ENCODE measurements at regions of chr21 and their contacts with region 1.

Region 1: DNA sequence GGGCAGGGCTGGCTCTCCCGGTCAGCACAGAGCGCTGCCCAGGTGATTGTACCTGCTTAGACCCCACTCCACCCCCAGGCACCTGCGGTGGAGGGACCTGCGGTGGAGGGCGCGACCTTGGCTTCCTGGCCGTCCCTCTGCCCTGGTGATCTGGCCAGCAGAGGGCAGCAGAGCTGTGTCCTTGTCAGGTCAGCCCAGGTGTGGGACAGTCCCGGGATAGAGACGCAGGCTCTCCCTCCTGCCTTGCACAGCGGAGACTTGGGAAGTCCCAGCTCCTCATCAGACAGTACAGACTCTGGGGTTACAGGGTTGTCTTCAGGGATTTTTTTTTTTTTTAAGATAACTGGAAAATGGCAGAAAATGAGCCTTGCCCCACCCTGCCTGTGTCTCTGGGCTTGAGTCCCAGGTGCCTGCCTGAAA is 10.0 kb downstream of the SLX9 start:
- ATAC-seq: peak; percentile 85 to 96 (median 88)
- H3K4me3 ChIP-seq: no peak overlapping the region
- H3K27ac ChIP-seq: no peak overlapping the region
- H3K4me1 ChIP-seq: peaks cover 0 to under 1% of the 10 kb centered on the region in 2 donors

Region 2: DNA sequence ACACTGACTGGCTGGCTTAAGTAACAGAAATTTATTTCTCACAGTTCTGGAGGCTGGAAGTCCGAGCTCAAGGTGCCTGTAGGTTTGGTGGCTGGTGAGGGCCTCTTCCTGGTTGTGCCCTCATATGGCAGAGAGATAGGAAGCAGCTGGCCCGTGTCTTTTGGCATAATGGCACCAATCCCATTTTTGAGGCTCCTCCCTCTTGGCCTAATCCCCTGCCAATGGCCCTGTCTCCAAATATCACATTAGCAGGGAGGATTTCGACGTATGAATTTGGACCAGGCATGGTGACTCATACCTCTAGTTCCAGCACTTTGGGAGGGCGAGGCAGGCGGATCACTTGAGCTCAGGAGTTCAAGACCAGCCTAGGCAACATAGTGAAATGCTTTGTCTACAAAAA is 1047.3 kb before region 1 on chr21:
- in situ Hi-C with region 1: no loop called
- ATAC-seq: peak in 3 of 8 experiments; percentile 20 to 71 (median 33)
- H3K4me3 ChIP-seq: no peak overlapping the region
- H3K27ac ChIP-seq: no peak overlapping the region
- H3K4me1 ChIP-seq: peaks cover 6% of the 10 kb centered on the region in 2 donors

Region 3: GRCh38 chr21:44709426-44710293 is 240.1 kb before region 1 on chr21:
- in situ Hi-C with region 1: no loop called
- ATAC-seq: peak in 7 of 8 experiments; percentile 9 to 48 (median 28)
- H3K4me3 ChIP-seq: no peak overlapping the region
- H3K27ac ChIP-seq: no peak overlapping the region
- H3K4me1 ChIP-seq: peaks cover 41 to 59% of the 10 kb centered on the region in 2 donors

Region 4: GRCh38 chr21:44761011-44761729 is 188.6 kb before region 1 on chr21:
- in situ Hi-C with region 1: no loop called
- ATAC-seq: peak in 1 of 8 experiments; percentile 34
- H3K4me3 ChIP-seq: no peak overlapping the region
- H3K27ac ChIP-seq: no peak overlapping the region
- H3K4me1 ChIP-seq: peaks cover 0 to 3% of the 10 kb centered on the region in 2 donors

Region 5: GRCh38 chr21:45129189-45129923 is 179.6 kb after region 1 on chr21:
- in situ Hi-C with region 1: loop called in 8 of 9 experiments (anchors 5 to 25 kb)
- ATAC-seq: peak in 3 of 8 experiments; percentile 28 to 69 (median 59)
- H3K4me3 ChIP-seq: no peak overlapping the region
- H3K27ac ChIP-seq: no peak overlapping the region
- H3K4me1 ChIP-seq: peaks cover 18 to 20% of the 10 kb centered on the region in 2 donors

Region 6: GRCh38 chr21:45140346-45140940 is 190.7 kb after region 1 on chr21:
- in situ Hi-C with region 1: loop called in 6 of 9 experiments (anchors 10 to 25 kb)
- ATAC-seq: peak; percentile 84 to 97 (median 90)
- H3K4me3 ChIP-seq: no peak overlapping the region
- H3K27ac ChIP-seq: no peak overlapping the region
- H3K4me1 ChIP-seq: peaks cover 10 to 17% of the 10 kb centered on the region in 2 donors

Region 7: GRCh38 chr21:45244799-45245340 is 295.1 kb after region 1 on chr21:
- in situ Hi-C with region 1: no loop called
- ATAC-seq: no peak
- H3K4me3 ChIP-seq: no peak overlapping the region
- H3K27ac ChIP-seq: no peak overlapping the region
- H3K4me1 ChIP-seq: peaks cover 10% of the 10 kb centered on the region in 2 donors

Region 8: GRCh38 chr21:45287438-45288391 is 337.9 kb after region 1 on chr21 and contains the start of gene POFUT2:
- in situ Hi-C with region 1: loop called in 1 of 9 experiments (anchors 25 kb)
- ATAC-seq: peak; percentile 65 to 80 (median 68)
- H3K4me3 ChIP-seq: peak within 1 kb of the TSS; percentile 55 to 98 (median 90)
- H3K27ac ChIP-seq: peak within 1 kb of the TSS; percentile 90 to 95
- H3K4me1 ChIP-seq: peaks cover 14 to 16% of the 10 kb centered on the region in 2 donors
- total RNA-seq, gene POFUT2: 17.3 to 40.8 (median 25.6) TPM